Vagina (tissue), 2 donors: ENCODE measurements at regions of chr3 and their contacts with region 1.

Region 1: DNA sequence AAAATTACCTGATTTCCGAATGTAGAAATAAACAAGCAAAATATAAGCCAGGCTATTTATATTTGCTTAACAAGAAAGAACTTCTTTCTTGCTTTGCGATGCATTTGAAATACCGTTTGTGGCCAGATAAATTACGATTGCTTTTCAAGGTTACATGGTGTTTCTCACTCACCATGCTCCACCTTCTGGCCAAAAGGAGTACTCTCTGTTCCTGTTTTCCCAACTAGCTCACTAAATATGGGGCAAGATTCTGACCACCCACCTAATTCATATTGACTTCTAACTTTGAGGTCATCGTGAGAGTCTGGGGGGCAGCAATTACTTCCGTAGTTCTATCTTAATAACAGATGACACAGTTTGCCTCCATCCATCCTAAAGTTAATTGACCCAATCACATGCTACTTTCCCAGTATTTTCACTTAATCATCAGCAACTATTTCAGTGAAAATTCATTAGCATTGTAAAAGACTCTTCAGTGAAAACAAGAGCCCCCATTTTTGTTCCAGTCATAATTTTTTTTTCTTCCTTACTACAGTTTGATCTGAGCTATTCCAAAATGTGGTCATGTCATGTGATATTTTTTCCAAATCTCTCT is 25.9 kb downstream of the ACP3 start:
- DNase-seq: no peak
- H3K4me3 ChIP-seq: no peak overlapping the region
- H3K27ac ChIP-seq: no peak overlapping the region
- H3K4me1 ChIP-seq: no peaks in the 10 kb centered on the region
- H3K27me3 ChIP-seq: no peaks in the 10 kb centered on the region
- CTCF ChIP-seq: peak; percentile 49 to 87 (median 61)
- POLR2A ChIP-seq: no peak

Region 2: GRCh38 chr3:132057909-132058308 is 285.2 kb before region 1 on chr3:
- intact Hi-C with region 1: no loop called
- DNase-seq: no peak
- H3K4me3 ChIP-seq: no peak overlapping the region
- H3K27ac ChIP-seq: no peak overlapping the region
- H3K4me1 ChIP-seq: no peaks in the 10 kb centered on the region
- H3K27me3 ChIP-seq: no peaks in the 10 kb centered on the region
- CTCF ChIP-seq: no peak
- POLR2A ChIP-seq: no peak

Region 3: GRCh38 chr3:132241776-132242514 is 101.2 kb before region 1 on chr3:
- intact Hi-C with region 1: no loop called
- DNase-seq: no peak
- H3K4me3 ChIP-seq: no peak overlapping the region
- H3K27ac ChIP-seq: no peak overlapping the region
- H3K4me1 ChIP-seq: no peaks in the 10 kb centered on the region
- H3K27me3 ChIP-seq: no peaks in the 10 kb centered on the region
- CTCF ChIP-seq: no peak
- POLR2A ChIP-seq: no peak

Region 4: GRCh38 chr3:132253262-132253878 is 89.7 kb before region 1 on chr3:
- intact Hi-C with region 1: loop called (anchors 10 kb)
- DNase-seq: no peak
- H3K4me3 ChIP-seq: no peak overlapping the region
- H3K27ac ChIP-seq: no peak overlapping the region
- H3K4me1 ChIP-seq: no peaks in the 10 kb centered on the region
- H3K27me3 ChIP-seq: no peaks in the 10 kb centered on the region
- CTCF ChIP-seq: peak in 2 of 3 experiments; percentile 49 to 57
- POLR2A ChIP-seq: no peak

Region 5: GRCh38 chr3:133439563-133439962 is 1096.4 kb after region 1 on chr3:
- intact Hi-C with region 1: loop called (anchors 10 kb)
- DNase-seq: no peak
- H3K4me3 ChIP-seq: no peak overlapping the region
- H3K27ac ChIP-seq: no peak overlapping the region
- H3K4me1 ChIP-seq: no peaks in the 10 kb centered on the region
- H3K27me3 ChIP-seq: no peaks in the 10 kb centered on the region
- CTCF ChIP-seq: no peak
- POLR2A ChIP-seq: no peak